Heart left ventricle (tissue), 16 donors: ENCODE measurements at regions of chr19 and their contacts with region 1.

Region 1: GRCh38 chr19:12365236-12366162 is at the start of gene ZNF442:
- DNase-seq: peak; percentile 94 to 99 (median 98)
- ATAC-seq: peak; percentile 99 to 100 (median 99)
- H3K4me3 ChIP-seq: peak within 1 kb of the TSS; percentile 66 to 99 (median 94)
- H3K27ac ChIP-seq: peak within 1 kb of the TSS; percentile 77 to 97 (median 90)
- H3K4me1 ChIP-seq: peaks cover 0 to 19% (median 11%) of the 10 kb centered on the region in 12 donors
- H3K27me3 ChIP-seq: no peaks in the 10 kb centered on the region
- CTCF ChIP-seq: peak; percentile 22 to 83 (median 66)
- POLR2A ChIP-seq: peak; percentile 9 to 93
- total RNA-seq, gene ZNF442: 1.1 to 4.3 (median 3.6) TPM

Region 2: GRCh38 chr19:12194827-12195731 is 170.4 kb before region 1 on chr19:
- intact Hi-C with region 1: loop called in 2 of 10 experiments (anchors 5 to 10 kb)
- DNase-seq: peak; percentile 86 to 92 (median 88)
- ATAC-seq: peak; percentile 98 to 100 (median 100)
- H3K4me3 ChIP-seq: peak overlapping the region; percentile 49 to 96 (median 81)
- H3K27ac ChIP-seq: peak overlapping the region in 11 of 12 donors; percentile 47 to 88 (median 75)
- H3K4me1 ChIP-seq: peaks cover 0 to 17% (median 7%) of the 10 kb centered on the region in 12 donors
- H3K27me3 ChIP-seq: no peaks in the 10 kb centered on the region
- CTCF ChIP-seq: no peak
- POLR2A ChIP-seq: peak in 1 of 2 donors; percentile 59

Region 3: GRCh38 chr19:12202250-12202649 is 163.2 kb before region 1 on chr19:
- intact Hi-C with region 1: loop called in 2 of 10 experiments (anchors 5 to 10 kb)
- DNase-seq: peak in 3 of 5 donors; percentile 24 to 40 (median 32)
- ATAC-seq: peak; percentile 37 to 79 (median 66)
- H3K4me3 ChIP-seq: no peak overlapping the region
- H3K27ac ChIP-seq: no peak overlapping the region
- H3K4me1 ChIP-seq: no peaks in the 10 kb centered on the region
- H3K27me3 ChIP-seq: no peaks in the 10 kb centered on the region
- CTCF ChIP-seq: peak in 10 of 12 donors; percentile 19 to 52 (median 34)
- POLR2A ChIP-seq: no peak

Region 4: GRCh38 chr19:12244370-12244769 is 121.1 kb before region 1 on chr19:
- intact Hi-C with region 1: no loop called
- DNase-seq: no peak
- ATAC-seq: no peak
- H3K4me3 ChIP-seq: no peak overlapping the region
- H3K27ac ChIP-seq: no peak overlapping the region
- H3K4me1 ChIP-seq: peaks cover 0 to 2% (median 0%) of the 10 kb centered on the region in 12 donors
- H3K27me3 ChIP-seq: no peaks in the 10 kb centered on the region
- CTCF ChIP-seq: peak in 3 of 12 donors; percentile 18 to 30 (median 23)
- POLR2A ChIP-seq: no peak

Region 5: DNA sequence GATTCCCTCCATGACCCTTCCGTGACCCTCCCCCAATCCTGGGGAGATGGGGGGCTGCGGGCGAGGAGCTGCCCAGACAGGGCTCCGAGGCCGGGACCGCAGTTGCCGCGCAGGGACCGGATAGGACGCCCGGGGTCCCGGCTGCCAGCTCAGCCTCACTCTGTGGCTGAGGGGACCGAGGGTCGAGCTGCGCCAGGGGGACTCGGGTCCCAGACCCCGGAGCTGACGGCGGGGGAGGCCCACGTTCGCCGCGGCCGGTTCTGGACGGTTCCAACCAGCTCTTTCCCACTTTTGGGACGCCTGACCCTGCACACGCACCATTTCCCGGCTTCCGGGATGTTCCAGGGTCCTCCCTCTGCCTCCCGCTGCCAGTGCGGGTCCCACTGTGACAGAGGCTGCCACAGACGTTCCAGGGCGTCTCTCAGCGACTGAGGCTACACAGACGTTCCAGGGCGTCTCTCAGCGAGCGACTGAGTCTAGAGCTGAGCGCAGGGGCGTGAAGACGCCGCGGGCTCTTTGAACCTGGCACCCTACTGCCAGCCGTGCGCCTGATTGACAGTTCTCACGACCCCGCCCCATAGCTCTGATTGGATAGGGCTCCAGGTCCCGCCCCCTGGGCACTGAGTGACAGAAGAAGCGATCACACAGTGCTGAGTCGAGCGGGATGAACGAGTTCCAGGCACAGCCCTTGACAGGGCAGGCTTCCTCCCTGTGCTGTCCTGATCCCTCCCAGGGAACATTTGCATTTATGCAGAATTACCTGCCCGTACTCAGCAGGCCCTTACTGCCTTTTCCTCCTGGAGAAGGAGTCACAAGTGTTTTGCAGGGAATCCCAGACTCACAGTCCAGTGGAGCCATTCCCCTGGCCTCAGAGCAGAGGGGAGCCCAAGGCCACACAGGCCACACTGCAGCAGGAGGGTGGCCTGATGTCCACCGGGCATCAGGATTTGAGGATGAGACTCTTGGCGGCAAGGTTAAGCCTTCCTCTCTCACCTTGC is 32.0 kb before region 1 on chr19 and contains the start of gene ZNF563:
- intact Hi-C with region 1: loop called in 4 of 10 experiments (anchors 1 to 2 kb)
- DNase-seq: peak; percentile 96 to 99 (median 98)
- ATAC-seq: peak; percentile 97 to 99 (median 99)
- H3K4me3 ChIP-seq: peak within 1 kb of the TSS; percentile 63 to 99 (median 80)
- H3K27ac ChIP-seq: peak within 1 kb of the TSS; percentile 79 to 97 (median 90)
- H3K4me1 ChIP-seq: peaks cover 0 to 37% (median 17%) of the 10 kb centered on the region in 12 donors
- H3K27me3 ChIP-seq: no peaks in the 10 kb centered on the region
- CTCF ChIP-seq: no peak
- POLR2A ChIP-seq: peak; percentile 46 to 95
- total RNA-seq, gene ZNF563: 1.5 to 6.9 (median 3.8) TPM